PC-9 (cell line): ENCODE measurements at regions of chr1 and their contacts with region 1.

Region 1: DNA sequence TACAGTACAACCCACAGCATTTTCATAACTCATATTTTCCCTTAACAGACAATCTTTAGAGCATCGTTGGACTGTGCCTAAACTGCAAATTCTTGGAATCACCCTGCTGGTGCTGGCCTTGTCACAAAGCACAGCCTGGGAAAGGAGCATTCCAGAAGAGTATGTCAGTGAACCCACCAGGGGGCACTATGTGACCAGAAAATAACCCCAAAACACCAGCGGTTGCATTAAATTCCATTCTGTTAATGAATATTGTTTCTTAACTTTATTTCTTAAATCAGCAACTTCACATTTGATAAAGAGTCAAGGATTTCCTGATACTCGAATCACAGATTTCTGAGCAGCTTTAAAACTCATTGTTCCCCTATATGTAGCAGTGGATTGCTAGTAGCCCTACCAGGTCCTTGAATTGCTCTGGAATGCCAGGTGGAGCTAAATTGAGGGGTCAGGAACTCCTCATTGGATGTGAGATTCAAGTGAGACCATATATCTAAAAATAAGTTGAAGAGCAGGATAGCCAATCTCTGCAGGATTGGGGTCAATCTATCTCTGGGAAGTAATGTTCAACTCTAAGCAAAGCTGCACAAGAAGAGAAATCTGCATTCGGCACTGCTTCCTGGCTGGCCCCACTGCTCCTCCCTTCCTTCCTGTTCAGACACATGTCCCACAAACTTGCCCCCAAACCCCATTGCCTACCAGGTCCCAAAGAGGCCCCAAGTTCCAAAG is 12.7 kb upstream of the RAB4A start:
- DNase-seq: peak; percentile 51 to 55
- H3K4me3 ChIP-seq: no peak overlapping the region
- H3K27ac ChIP-seq: no peak overlapping the region
- H3K4me1 ChIP-seq: 0 out of 2 replicates have a peak, but pooled peaks cover 4% of the 10 kb centered on the region
- H3K27me3 ChIP-seq: no peaks in the 10 kb centered on the region
- CTCF ChIP-seq: peak; percentile 85

Region 2: GRCh38 chr1:228691926-228692325 is 566.3 kb before region 1 on chr1:
- CTCF ChIA-PET with region 1: interaction called, 3 read pairs
- POLR2A ChIA-PET with region 1: no interaction called
- intact Hi-C with region 1: loop called (anchors 5 kb)
- DNase-seq: peak; percentile 11 to 53
- H3K4me3 ChIP-seq: no peak overlapping the region
- H3K27ac ChIP-seq: no peak overlapping the region
- H3K4me1 ChIP-seq: no peaks in the 10 kb centered on the region
- H3K27me3 ChIP-seq: peaks cover 29% of the 10 kb centered on the region
- CTCF ChIP-seq: peak; percentile 60

Region 3: GRCh38 chr1:229464672-229465071 is 206.5 kb after region 1 on chr1:
- CTCF ChIA-PET with region 1: no interaction called
- POLR2A ChIA-PET with region 1: no interaction called
- intact Hi-C with region 1: loop called (anchors 5 kb)
- DNase-seq: no peak
- H3K4me3 ChIP-seq: no peak overlapping the region
- H3K27ac ChIP-seq: no peak overlapping the region
- H3K4me1 ChIP-seq: no peaks in the 10 kb centered on the region
- H3K27me3 ChIP-seq: no peaks in the 10 kb centered on the region
- CTCF ChIP-seq: no peak

Region 4: GRCh38 chr1:229514578-229515275 is 256.5 kb after region 1 on chr1:
- CTCF ChIA-PET with region 1: no interaction called
- POLR2A ChIA-PET with region 1: no interaction called
- intact Hi-C with region 1: loop called (anchors 1 kb)
- DNase-seq: peak; percentile 56 to 67
- H3K4me3 ChIP-seq: no peak overlapping the region
- H3K27ac ChIP-seq: no peak overlapping the region
- H3K4me1 ChIP-seq: no peaks in the 10 kb centered on the region
- H3K27me3 ChIP-seq: no peaks in the 10 kb centered on the region
- CTCF ChIP-seq: peak; percentile 79